ENCODE measurements at regions of chr6 and their contacts with region 1.

Region 1: GRCh38 chr6:57316581-57317059 is 810 bp upstream of the PRIM2 start:
- DNase-seq: peak; percentile 86
- CTCF ChIP-seq: peak; percentile 81

Region 2: DNA sequence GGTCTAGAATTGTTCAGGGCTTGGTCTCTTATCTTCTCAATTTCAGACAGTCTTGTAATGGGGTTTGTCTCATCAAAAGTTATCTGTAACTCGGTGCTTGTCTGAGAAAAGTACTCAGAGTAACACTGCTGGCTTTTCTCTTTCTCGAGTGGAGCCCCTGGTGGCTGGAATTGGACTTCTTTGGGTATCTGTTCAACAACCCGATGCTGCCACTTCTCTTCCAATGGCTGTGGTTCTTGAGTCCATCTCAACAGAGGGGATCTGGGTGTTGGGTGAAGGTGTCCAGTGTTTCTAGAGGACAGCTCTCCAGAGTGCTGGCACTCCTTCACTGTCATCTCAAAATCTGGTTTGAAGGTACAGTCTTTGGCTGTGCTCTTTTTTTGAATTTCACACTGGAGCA is 698.6 kb before region 1 on chr6:
- in situ Hi-C with region 1: loop called (anchors 25 kb)
- DNase-seq: no peak
- CTCF ChIP-seq: no peak

Region 3: GRCh38 chr6:56902641-56903464 is 413.8 kb before region 1 on chr6:
- in situ Hi-C with region 1: loop called (anchors 5 kb)
- DNase-seq: peak; percentile 20
- CTCF ChIP-seq: peak; percentile 63

Region 4: GRCh38 chr6:57021086-57021720 is 295.4 kb before region 1 on chr6:
- in situ Hi-C with region 1: loop called (anchors 25 kb)
- DNase-seq: peak; percentile 56
- CTCF ChIP-seq: peak; percentile 52

Region 5: DNA sequence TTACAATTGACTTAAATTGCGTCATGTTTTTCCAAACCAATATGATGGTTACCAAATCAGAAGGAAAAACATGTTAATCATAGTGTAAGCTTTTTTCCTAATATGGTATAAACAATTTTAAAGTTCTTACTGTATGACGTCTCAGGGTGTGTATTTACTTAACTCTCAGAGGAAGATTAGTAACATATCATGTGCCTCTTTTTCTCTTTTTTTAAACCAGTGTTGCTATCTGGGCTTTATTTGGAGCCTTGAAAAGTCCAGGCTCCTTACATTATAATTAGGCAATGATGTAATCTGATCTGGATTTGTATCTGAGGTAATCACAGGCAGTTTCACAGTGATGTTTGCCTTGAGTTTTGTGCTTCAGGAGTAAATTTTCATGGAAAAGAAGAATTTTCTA is 74.1 kb before region 1 on chr6:
- in situ Hi-C with region 1: no loop called
- DNase-seq: no peak
- CTCF ChIP-seq: no peak